Ascending aorta (tissue), 2 donors: ENCODE measurements at regions of chr4 and their contacts with region 1.

Region 1: GRCh38 chr4:181202240-181202639 is 1041.0 kb upstream of the TENM3 start:
- DNase-seq: no peak
- H3K4me3 ChIP-seq: no peak overlapping the region
- H3K27ac ChIP-seq: no peak overlapping the region
- H3K4me1 ChIP-seq: no peaks in the 10 kb centered on the region
- H3K27me3 ChIP-seq: no peaks in the 10 kb centered on the region
- CTCF ChIP-seq: no peak

Region 2: DNA sequence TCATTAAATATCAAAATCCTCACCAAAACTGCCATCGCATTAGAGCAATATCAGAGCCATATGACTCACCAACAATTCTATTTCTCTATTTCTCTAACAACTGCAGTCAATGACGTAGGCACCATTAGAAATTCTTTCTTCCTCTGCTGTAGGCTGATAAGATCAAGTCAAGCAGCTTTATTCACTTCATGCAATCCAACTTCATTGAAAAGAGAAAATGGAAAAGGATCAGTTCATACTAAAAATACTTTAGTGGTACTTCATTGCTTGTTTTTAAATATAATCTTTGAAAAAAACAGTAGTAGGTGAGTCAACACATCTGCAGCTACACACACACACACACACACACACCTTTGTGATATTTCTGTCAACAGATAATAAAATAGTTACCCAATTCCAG is 695.7 kb after region 1 on chr4:
- intact Hi-C with region 1: loop called (anchors 5 kb)
- DNase-seq: no peak
- H3K4me3 ChIP-seq: no peak overlapping the region
- H3K27ac ChIP-seq: no peak overlapping the region
- H3K4me1 ChIP-seq: no peaks in the 10 kb centered on the region
- H3K27me3 ChIP-seq: no peaks in the 10 kb centered on the region
- CTCF ChIP-seq: no peak